ENCODE measurements at regions of chrX and their contacts with region 1.

Region 1: GRCh38 chrX:69222103-69223090 is 57.1 kb upstream of the PJA1 start:
- DNase-seq: peak; percentile 73 to 85
- H3K4me3 ChIP-seq: peak overlapping the region in 1 of 4 experiments; percentile 44; a peak in 4 of 8 replicates
- H3K27ac ChIP-seq: no peak overlapping the region
- H3K4me1 ChIP-seq: peaks cover 0 to 15% (median 8%) of the 10 kb centered on the region in 4 experiments; a peak in 4 of 7 replicates
- H3K27me3 ChIP-seq: peaks cover 5 to 21% (median 14%) of the 10 kb centered on the region in 4 experiments
- CTCF ChIP-seq: peak; percentile 69 to 75 (median 75)
- EP300 ChIP-seq: no peak
- POLR2A ChIP-seq: no peak
- RAD21 ChIP-seq: peak; percentile 89 to 92

Region 2: DNA sequence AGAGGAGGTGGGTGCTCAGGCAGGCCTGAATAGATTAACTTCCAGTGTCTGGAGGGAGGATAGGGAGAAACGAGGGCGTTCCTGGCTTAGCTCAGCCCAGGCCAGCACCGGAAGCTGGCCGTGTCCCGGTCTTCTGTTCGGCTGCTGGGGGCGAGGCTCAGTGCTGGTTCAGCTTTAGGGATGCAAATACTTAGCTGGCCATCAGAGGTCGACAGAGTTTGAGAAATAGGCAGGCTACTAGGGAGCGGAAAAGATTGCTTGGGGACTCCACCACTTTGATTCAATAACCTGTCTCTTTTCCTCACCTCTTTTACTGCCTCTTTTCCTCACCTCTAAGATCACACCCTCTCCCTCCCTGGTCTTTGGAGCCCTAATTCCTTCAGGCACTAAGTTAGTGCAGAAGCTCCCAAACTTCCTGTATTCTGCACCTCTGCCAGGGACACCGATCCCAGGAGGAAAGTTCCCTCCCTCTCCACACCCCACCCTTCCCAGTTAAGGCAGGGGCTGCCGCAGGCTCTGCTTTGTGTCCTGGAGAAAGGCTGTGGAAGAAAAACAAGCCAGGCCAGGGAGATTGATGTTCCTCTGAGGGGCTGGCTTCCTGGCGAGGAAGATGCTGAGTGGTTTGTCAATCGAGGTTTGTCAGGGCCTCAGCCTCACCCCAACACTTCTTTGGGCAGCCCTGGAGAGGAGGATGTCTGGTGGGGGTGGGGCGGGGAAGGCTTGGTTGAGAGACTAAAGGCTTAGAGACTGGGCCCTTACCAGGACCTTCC is 399.6 kb before region 1 on chrX:
- CTCF ChIA-PET with region 1: interaction called, 35 read pairs
- POLR2A ChIA-PET with region 1: interaction called, 13 read pairs
- DNase-seq: no peak
- H3K4me3 ChIP-seq: no peak overlapping the region
- H3K27ac ChIP-seq: no peak overlapping the region
- H3K4me1 ChIP-seq: peaks cover 0 to 3% (median 0%) of the 10 kb centered on the region in 4 experiments; a peak in 3 of 7 replicates
- H3K27me3 ChIP-seq: peaks cover 0 to 27% (median 20%) of the 10 kb centered on the region in 4 experiments; a peak in 6 of 7 replicates
- CTCF ChIP-seq: peak in 2 of 3 experiments; percentile 53 to 76; a peak in 3 of 4 replicates
- EP300 ChIP-seq: no peak
- POLR2A ChIP-seq: no peak
- RAD21 ChIP-seq: peak; percentile 81 to 87

Region 3: GRCh38 chrX:69116077-69116476 is 106.3 kb before region 1 on chrX:
- CTCF ChIA-PET with region 1: interaction called, 11 read pairs
- POLR2A ChIA-PET with region 1: no interaction called
- DNase-seq: no peak
- H3K4me3 ChIP-seq: no peak overlapping the region
- H3K27ac ChIP-seq: no peak overlapping the region
- H3K4me1 ChIP-seq: peaks cover 0 to 2% (median 0%) of the 10 kb centered on the region in 4 experiments; a peak in 3 of 7 replicates
- H3K27me3 ChIP-seq: no peaks in the 10 kb centered on the region
- CTCF ChIP-seq: no peak
- EP300 ChIP-seq: no peak
- POLR2A ChIP-seq: no peak
- RAD21 ChIP-seq: no peak

Region 4: GRCh38 chrX:69133921-69134542 is 88.4 kb before region 1 on chrX:
- CTCF ChIA-PET with region 1: interaction called, 19 read pairs
- POLR2A ChIA-PET with region 1: interaction called, 3 read pairs
- DNase-seq: peak in 1 of 2 experiments; percentile 49
- H3K4me3 ChIP-seq: no peak overlapping the region
- H3K27ac ChIP-seq: no peak overlapping the region
- H3K4me1 ChIP-seq: peaks cover 7 to 34% (median 26%) of the 10 kb centered on the region in 4 experiments
- H3K27me3 ChIP-seq: peaks cover 0 to 10% (median 4%) of the 10 kb centered on the region in 4 experiments; a peak in 4 of 7 replicates
- CTCF ChIP-seq: peak; percentile 41 to 77 (median 70)
- EP300 ChIP-seq: no peak
- POLR2A ChIP-seq: no peak
- RAD21 ChIP-seq: peak; percentile 50 to 70

Region 5: GRCh38 chrX:69179380-69179911 is 43.0 kb before region 1 on chrX:
- CTCF ChIA-PET with region 1: interaction called, 10 read pairs
- POLR2A ChIA-PET with region 1: no interaction called
- DNase-seq: no peak
- H3K4me3 ChIP-seq: peak overlapping the region in 1 of 4 experiments; percentile 42; a peak in 2 of 8 replicates
- H3K27ac ChIP-seq: no peak overlapping the region
- H3K4me1 ChIP-seq: peaks cover 0 to 5% (median 0%) of the 10 kb centered on the region in 4 experiments; a peak in 1 of 7 replicates
- H3K27me3 ChIP-seq: peaks cover 0 to 2% (median 0%) of the 10 kb centered on the region in 4 experiments; a peak in 3 of 7 replicates
- CTCF ChIP-seq: no peak
- EP300 ChIP-seq: no peak
- POLR2A ChIP-seq: no peak
- RAD21 ChIP-seq: no peak

Region 6: DNA sequence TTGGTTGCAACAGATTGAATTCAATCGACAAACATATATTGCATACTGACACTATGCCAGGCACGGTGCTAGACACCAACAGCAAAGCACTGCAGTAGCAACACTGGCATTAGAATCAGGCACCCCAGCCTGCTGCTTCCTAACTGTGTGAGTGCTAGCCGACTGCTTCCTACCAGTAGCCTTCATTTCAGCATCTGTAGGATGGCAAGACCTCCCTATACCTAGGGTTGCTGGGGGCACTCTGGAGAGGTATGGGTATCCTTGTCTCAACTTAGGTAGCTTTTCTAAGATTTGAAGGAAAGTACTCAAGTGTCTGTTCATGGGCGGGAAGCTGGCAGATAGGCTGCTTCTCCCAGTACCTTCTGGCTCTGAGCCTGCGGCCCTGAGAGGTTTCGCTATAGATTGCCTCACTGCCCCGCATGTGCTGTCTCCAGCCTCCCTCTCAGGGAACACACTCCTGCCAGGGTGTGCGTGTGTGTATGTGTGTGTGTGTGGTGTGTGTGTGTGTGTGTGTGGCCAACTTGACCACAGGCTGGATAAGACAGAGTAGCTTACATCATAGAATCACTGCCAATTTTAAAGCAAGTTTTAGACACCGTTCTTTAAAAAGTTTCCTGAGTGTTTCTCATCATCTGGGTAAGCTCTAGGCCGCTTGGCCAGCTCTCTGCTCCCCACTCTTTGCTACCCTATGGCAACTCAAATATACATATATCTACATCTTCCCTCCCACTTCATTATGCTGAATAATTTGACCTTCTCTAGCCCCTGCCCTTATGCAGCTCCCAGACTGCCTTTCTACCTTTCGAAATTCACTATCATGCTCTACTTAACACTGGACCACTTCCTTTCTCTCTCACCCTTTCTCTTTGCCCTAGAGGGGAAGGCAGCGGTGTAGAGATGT is 39.9 kb after region 1 on chrX:
- CTCF ChIA-PET with region 1: interaction called, 17 read pairs
- POLR2A ChIA-PET with region 1: no interaction called
- DNase-seq: no peak
- H3K4me3 ChIP-seq: no peak overlapping the region
- H3K27ac ChIP-seq: no peak overlapping the region
- H3K4me1 ChIP-seq: peaks cover 2 to 14% (median 6%) of the 10 kb centered on the region in 4 experiments; a peak in 5 of 7 replicates
- H3K27me3 ChIP-seq: peaks cover 34 to 69% (median 66%) of the 10 kb centered on the region in 4 experiments
- CTCF ChIP-seq: no peak
- EP300 ChIP-seq: no peak
- POLR2A ChIP-seq: no peak
- RAD21 ChIP-seq: no peak

Region 7: GRCh38 chrX:69285881-69286564 is 63.6 kb after region 1 on chrX:
- CTCF ChIA-PET with region 1: interaction called, 13 read pairs
- POLR2A ChIA-PET with region 1: no interaction called
- DNase-seq: peak in 1 of 2 experiments; percentile 81
- H3K4me3 ChIP-seq: peak overlapping the region in 3 of 4 experiments; percentile 29 to 60 (median 33); a peak in 4 of 8 replicates
- H3K27ac ChIP-seq: no peak overlapping the region
- H3K4me1 ChIP-seq: peaks cover 0 to 13% (median 5%) of the 10 kb centered on the region in 4 experiments; a peak in 6 of 7 replicates
- H3K27me3 ChIP-seq: peaks cover 3 to 33% (median 27%) of the 10 kb centered on the region in 4 experiments
- CTCF ChIP-seq: peak in 2 of 3 experiments; percentile 66 to 72; a peak in 3 of 4 replicates
- EP300 ChIP-seq: no peak
- POLR2A ChIP-seq: no peak
- RAD21 ChIP-seq: peak; percentile 79 to 83